CD4-positive, alpha-beta T cell (primary cell): ENCODE measurements at regions of chr1 and their contacts with region 1.

Region 1: GRCh38 chr1:35192853-35193664 is at the start of gene SFPQ:
- DNase-seq: peak; percentile 95 to 99 (median 97)
- ATAC-seq: peak; percentile 88
- H3K4me3 ChIP-seq: peak within 1 kb of the TSS; percentile 95
- H3K4me3 Mint-ChIP-seq: peak within 1 kb of the TSS; percentile 97
- H3K27ac ChIP-seq: peak within 1 kb of the TSS; percentile 98 to 99
- H3K27ac Mint-ChIP-seq: peak within 1 kb of the TSS; percentile 97
- H3K4me1 ChIP-seq: peaks cover 32% of the 10 kb centered on the region
- H3K4me1 Mint-ChIP-seq: peaks cover 53% of the 10 kb centered on the region
- H3K27me3 ChIP-seq: no peaks in the 10 kb centered on the region
- H3K27me3 Mint-ChIP-seq: no peaks in the 10 kb centered on the region
- CTCF ChIP-seq: no peak
- total RNA-seq, gene SFPQ: 766 to 767 TPM

Region 2: GRCh38 chr1:34859446-34860200 is 333.4 kb before region 1 on chr1 and contains the start of gene SMIM12:
- CTCF ChIA-PET with region 1: interaction called, 3 read pairs
- POLR2A ChIA-PET with region 1: interaction called, 3 read pairs
- intact Hi-C with region 1: loop called (anchors 10 kb)
- DNase-seq: peak; percentile 75 to 94 (median 88)
- ATAC-seq: peak; percentile 83
- H3K4me3 ChIP-seq: peak within 1 kb of the TSS; percentile 98
- H3K4me3 Mint-ChIP-seq: peak within 1 kb of the TSS; percentile 93
- H3K27ac ChIP-seq: peak within 1 kb of the TSS; percentile 80 to 91
- H3K27ac Mint-ChIP-seq: peak within 1 kb of the TSS; percentile 88
- H3K4me1 ChIP-seq: peaks cover 48% of the 10 kb centered on the region
- H3K4me1 Mint-ChIP-seq: peaks cover 68% of the 10 kb centered on the region
- H3K27me3 ChIP-seq: no peaks in the 10 kb centered on the region
- H3K27me3 Mint-ChIP-seq: no peaks in the 10 kb centered on the region
- CTCF ChIP-seq: peak; percentile 83
- total RNA-seq, gene SMIM12: 43.0 to 44.6 TPM

Region 3: DNA sequence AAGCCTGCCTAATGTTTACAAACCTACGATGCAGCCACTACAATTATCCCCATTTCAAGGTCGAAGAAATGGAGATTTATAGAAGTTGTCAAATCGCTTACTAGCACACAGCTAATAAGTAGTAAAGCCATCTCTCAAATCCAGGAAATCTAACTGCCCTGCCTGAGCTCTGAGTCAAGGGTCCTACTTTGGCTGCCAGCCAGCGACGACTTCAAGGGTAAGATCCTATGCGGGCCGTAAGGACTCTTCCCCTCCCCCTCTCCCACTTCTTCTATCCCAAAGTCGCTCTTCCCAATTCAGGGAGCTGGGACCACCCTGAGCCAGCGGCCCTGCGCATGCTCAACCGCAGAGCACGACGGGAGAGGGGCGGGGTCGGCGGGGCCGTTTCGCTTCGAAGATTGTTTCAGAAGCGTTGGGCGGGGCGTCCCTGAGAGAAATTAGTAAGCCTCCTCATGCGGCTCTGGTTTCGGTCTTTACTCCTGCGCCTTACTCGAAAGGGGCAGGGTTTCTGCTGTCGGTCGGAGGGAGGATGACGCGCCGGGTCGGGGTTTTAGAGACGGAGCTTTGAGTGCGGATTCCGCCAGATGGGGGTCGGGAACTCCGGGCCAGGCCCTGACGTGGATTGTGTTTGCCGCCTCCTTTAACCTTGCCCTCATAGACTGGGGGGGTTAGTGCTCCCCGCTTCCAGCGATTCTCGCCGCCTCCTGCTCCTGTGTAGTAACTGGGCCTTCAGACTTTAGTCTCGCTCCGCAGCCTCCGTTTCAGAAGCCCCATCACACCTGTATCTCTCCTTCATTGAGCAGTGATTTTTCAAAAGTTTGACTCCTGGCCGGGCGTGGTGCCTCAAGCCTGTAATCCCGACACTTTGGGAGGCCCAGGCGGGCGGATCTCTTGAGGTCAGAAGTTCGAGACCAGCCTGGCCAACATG is 113.8 kb before region 1 on chr1 and contains the start of gene ZMYM1:
- CTCF ChIA-PET with region 1: no interaction called
- POLR2A ChIA-PET with region 1: interaction called, 10 read pairs
- intact Hi-C with region 1: loop called in 1 of 2 experiments (anchors 5 kb)
- DNase-seq: peak; percentile 66 to 88 (median 76)
- ATAC-seq: peak; percentile 86
- H3K4me3 ChIP-seq: peak within 1 kb of the TSS; percentile 73
- H3K4me3 Mint-ChIP-seq: peak within 1 kb of the TSS; percentile 99
- H3K27ac ChIP-seq: peak within 1 kb of the TSS; percentile 75 to 86
- H3K27ac Mint-ChIP-seq: peak within 1 kb of the TSS; percentile 99
- H3K4me1 ChIP-seq: peaks cover 23% of the 10 kb centered on the region
- H3K4me1 Mint-ChIP-seq: peaks cover 39% of the 10 kb centered on the region
- H3K27me3 ChIP-seq: no peaks in the 10 kb centered on the region
- H3K27me3 Mint-ChIP-seq: peaks cover 9% of the 10 kb centered on the region
- CTCF ChIP-seq: no peak
- total RNA-seq, gene ZMYM1: 6.3 to 6.7 TPM

Region 4: DNA sequence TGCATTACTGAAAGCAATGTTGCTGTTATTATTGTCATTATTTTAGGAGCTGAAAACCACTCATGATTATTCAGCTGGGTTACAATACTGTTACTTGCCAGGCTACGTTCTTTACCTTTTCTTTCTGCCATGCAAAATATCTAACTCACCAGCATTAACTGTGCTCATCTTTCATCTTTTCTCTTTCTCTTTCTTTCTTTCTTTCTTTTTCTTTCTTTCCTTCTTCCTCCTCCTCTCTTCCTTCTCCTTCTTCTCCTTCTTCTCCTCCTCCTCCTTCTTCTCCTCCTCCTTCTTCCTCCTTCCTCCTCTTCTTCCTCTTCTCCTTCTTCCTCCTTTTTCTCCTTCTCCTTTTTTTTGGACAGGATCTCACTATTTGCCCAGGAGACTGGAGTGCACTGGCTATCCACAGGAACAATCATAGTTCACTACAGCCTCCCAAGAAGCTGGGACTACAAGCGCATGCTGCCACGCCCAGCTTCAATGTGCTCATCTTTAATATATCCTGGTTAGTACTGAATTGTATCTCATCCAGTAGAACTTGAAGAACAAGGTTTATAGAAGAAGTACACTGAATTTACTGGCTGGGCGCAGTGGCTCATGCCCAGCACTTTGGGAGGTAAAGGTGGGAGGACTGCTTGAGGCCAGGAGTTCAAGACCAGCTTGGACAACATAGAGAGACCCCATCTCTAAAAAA is 68.5 kb after region 1 on chr1:
- CTCF ChIA-PET with region 1: no interaction called
- POLR2A ChIA-PET with region 1: no interaction called
- intact Hi-C with region 1: no loop called
- DNase-seq: no peak
- ATAC-seq: no peak
- H3K4me3 ChIP-seq: no peak overlapping the region
- H3K4me3 Mint-ChIP-seq: no peak overlapping the region
- H3K27ac ChIP-seq: no peak overlapping the region
- H3K27ac Mint-ChIP-seq: no peak overlapping the region
- H3K4me1 ChIP-seq: no peaks in the 10 kb centered on the region
- H3K4me1 Mint-ChIP-seq: no peaks in the 10 kb centered on the region
- H3K27me3 ChIP-seq: peaks cover 0 to 3% of the 10 kb centered on the region in 2 experiments
- H3K27me3 Mint-ChIP-seq: peaks cover 13% of the 10 kb centered on the region
- CTCF ChIP-seq: no peak

Region 5: DNA sequence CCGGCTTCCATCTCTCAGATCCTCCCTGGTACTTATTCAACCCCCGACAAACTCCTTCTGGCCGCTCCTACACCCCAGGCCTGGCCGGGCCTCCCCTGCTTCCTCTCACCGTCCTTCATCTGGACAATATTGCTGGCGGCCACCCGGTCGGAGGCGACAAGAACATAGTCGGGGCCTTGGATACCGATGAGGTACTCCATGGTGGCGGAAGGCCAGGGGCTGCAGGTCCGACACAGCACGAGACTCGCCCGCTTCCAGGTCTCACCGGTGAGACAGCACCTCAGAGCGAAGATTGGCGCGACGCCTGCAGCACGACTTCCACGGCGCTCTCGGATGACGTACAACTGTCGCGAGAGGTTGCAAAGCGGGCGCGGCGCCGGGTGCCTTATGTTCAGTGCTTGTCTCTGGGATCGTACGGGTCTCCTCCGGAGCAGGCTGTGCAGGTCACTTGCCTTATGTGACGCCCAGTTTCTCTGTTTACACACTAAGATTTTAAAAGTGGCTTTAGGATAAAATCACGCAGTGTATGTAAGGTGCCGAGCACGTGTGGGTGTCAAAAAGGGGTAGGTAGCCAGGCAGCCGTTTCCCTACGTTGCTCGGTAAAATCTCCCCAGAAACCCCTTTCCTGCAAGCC is 448.3 kb after region 1 on chr1 and contains the start of gene PSMB2:
- CTCF ChIA-PET with region 1: no interaction called
- POLR2A ChIA-PET with region 1: no interaction called
- intact Hi-C with region 1: loop called in 1 of 2 experiments (anchors 2 kb)
- DNase-seq: peak; percentile 92 to 98 (median 96)
- ATAC-seq: peak; percentile 89
- H3K4me3 ChIP-seq: peak within 1 kb of the TSS; percentile 83
- H3K4me3 Mint-ChIP-seq: peak within 1 kb of the TSS; percentile 99
- H3K27ac ChIP-seq: peak within 1 kb of the TSS; percentile 63 to 73
- H3K27ac Mint-ChIP-seq: peak within 1 kb of the TSS; percentile 98
- H3K4me1 ChIP-seq: peaks cover 15% of the 10 kb centered on the region
- H3K4me1 Mint-ChIP-seq: peaks cover 47% of the 10 kb centered on the region
- H3K27me3 ChIP-seq: peaks cover 0 to 16% of the 10 kb centered on the region in 2 experiments
- H3K27me3 Mint-ChIP-seq: peaks cover 35% of the 10 kb centered on the region
- CTCF ChIP-seq: no peak
- total RNA-seq, gene PSMB2: 34.0 to 35.3 TPM